ENCODE measurements at regions of chr3 and their contacts with region 1.

Region 1: DNA sequence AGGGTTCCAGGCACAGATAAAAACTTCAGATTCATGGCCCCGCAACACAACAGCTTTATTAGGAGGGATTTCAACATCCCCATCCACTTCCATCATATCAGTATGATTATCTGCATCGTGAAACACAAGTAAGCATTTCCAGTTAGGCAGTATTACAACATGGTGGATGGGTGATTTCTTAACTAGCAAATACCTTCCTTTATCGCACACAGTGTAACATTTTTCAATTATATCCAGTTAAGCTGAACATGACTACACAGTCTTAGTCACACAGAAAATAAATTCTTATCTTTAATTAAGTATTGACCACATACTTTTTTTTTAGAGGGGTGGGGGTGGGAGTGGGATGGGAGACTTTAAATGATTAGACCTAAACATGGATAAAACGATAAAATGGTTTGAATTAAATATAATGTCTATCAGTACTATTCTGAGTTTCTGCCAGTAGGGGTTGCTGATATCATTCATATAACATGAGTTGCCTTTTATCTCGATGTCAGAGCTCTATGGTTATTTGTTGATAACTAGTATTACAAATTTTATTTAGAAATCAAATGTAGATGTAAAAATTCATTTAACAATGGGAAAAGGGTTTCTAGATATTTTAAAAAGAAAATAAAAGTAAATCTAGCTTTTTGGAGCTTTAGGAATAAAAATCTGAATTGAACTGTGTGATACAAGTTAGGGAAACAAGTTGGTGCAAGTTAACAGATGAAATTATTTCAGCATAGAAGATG is 146.6 kb downstream of the TBL1XR1 start:
- DNase-seq: peak in 3 of 14 experiments; percentile 70 to 76 (median 75)
- ATAC-seq: peak; percentile 93
- H3K4me3 ChIP-seq: no peak overlapping the region
- H3K4me3 Mint-ChIP-seq: no peak overlapping the region
- H3K27ac ChIP-seq: no peak overlapping the region
- H3K27ac Mint-ChIP-seq: peak overlapping the region; percentile 70
- H3K4me1 ChIP-seq: no peaks in the 10 kb centered on the region
- H3K4me1 Mint-ChIP-seq: peaks cover 22% of the 10 kb centered on the region
- H3K27me3 ChIP-seq: no peaks in the 10 kb centered on the region
- H3K27me3 Mint-ChIP-seq: no peaks in the 10 kb centered on the region
- CTCF ChIP-seq: peak; percentile 75

Region 2: GRCh38 chr3:177597311-177598096 is 546.8 kb after region 1 on chr3:
- CTCF ChIA-PET with region 1: no interaction called
- POLR2A ChIA-PET with region 1: no interaction called
- intact Hi-C with region 1: loop called in 1 of 2 experiments (anchors 5 kb)
- DNase-seq: peak in 7 of 14 experiments; percentile 3 to 85 (median 29)
- ATAC-seq: peak; percentile 93
- H3K4me3 ChIP-seq: peak overlapping the region; percentile 8
- H3K4me3 Mint-ChIP-seq: peak overlapping the region; percentile 83
- H3K27ac ChIP-seq: peak overlapping the region; percentile 67 to 79
- H3K27ac Mint-ChIP-seq: peak overlapping the region; percentile 96
- H3K4me1 ChIP-seq: peaks cover 37% of the 10 kb centered on the region
- H3K4me1 Mint-ChIP-seq: peaks cover 84% of the 10 kb centered on the region
- H3K27me3 ChIP-seq: no peaks in the 10 kb centered on the region
- H3K27me3 Mint-ChIP-seq: no peaks in the 10 kb centered on the region
- CTCF ChIP-seq: no peak

Region 3: GRCh38 chr3:177679568-177680441 is 629.1 kb after region 1 on chr3:
- CTCF ChIA-PET with region 1: no interaction called
- POLR2A ChIA-PET with region 1: no interaction called
- intact Hi-C with region 1: loop called in 1 of 2 experiments (anchors 10 kb)
- DNase-seq: peak in 1 of 14 experiments; percentile 55
- ATAC-seq: no peak
- H3K4me3 ChIP-seq: no peak overlapping the region
- H3K4me3 Mint-ChIP-seq: no peak overlapping the region
- H3K27ac ChIP-seq: no peak overlapping the region
- H3K27ac Mint-ChIP-seq: no peak overlapping the region
- H3K4me1 ChIP-seq: peaks cover 3% of the 10 kb centered on the region
- H3K4me1 Mint-ChIP-seq: peaks cover 17% of the 10 kb centered on the region
- H3K27me3 ChIP-seq: no peaks in the 10 kb centered on the region
- H3K27me3 Mint-ChIP-seq: no peaks in the 10 kb centered on the region
- CTCF ChIP-seq: no peak

Region 4: GRCh38 chr3:177777699-177778098 is 727.0 kb after region 1 on chr3:
- CTCF ChIA-PET with region 1: no interaction called
- POLR2A ChIA-PET with region 1: no interaction called
- intact Hi-C with region 1: loop called (anchors 2 to 10 kb)
- DNase-seq: peak in 10 of 14 experiments; percentile 7 to 58 (median 22)
- ATAC-seq: peak; percentile 55
- H3K4me3 ChIP-seq: no peak overlapping the region
- H3K4me3 Mint-ChIP-seq: no peak overlapping the region
- H3K27ac ChIP-seq: no peak overlapping the region
- H3K27ac Mint-ChIP-seq: no peak overlapping the region
- H3K4me1 ChIP-seq: peaks cover 16% of the 10 kb centered on the region
- H3K4me1 Mint-ChIP-seq: peaks cover 20% of the 10 kb centered on the region
- H3K27me3 ChIP-seq: no peaks in the 10 kb centered on the region
- H3K27me3 Mint-ChIP-seq: no peaks in the 10 kb centered on the region
- CTCF ChIP-seq: peak; percentile 35

Region 5: DNA sequence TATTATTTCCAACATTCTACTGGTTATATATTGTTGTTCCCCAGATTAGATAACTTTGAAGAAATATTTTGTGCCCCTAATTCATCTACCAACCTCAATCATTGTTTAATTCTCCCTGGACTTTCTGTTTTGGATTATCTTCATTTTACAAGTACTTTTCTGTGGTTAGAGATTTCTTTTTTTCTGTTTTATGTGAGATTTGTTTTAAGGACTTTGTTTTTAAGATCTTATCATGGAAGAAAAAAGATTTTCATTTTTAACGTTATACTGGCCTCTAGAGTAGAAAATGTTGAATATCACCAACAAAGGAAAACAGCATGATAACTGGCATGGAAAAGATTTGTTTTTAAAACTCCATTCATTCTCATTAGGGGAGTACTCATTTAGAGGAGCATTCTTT is 1274.7 kb after region 1 on chr3:
- CTCF ChIA-PET with region 1: interaction called, 3 read pairs
- POLR2A ChIA-PET with region 1: no interaction called
- intact Hi-C with region 1: loop called (anchors 1 to 5 kb)
- DNase-seq: peak in 1 of 14 experiments; percentile 22
- ATAC-seq: no peak
- H3K4me3 ChIP-seq: no peak overlapping the region
- H3K4me3 Mint-ChIP-seq: no peak overlapping the region
- H3K27ac ChIP-seq: no peak overlapping the region
- H3K27ac Mint-ChIP-seq: no peak overlapping the region
- H3K4me1 ChIP-seq: no peaks in the 10 kb centered on the region
- H3K4me1 Mint-ChIP-seq: no peaks in the 10 kb centered on the region
- H3K27me3 ChIP-seq: no peaks in the 10 kb centered on the region
- H3K27me3 Mint-ChIP-seq: no peaks in the 10 kb centered on the region
- CTCF ChIP-seq: no peak

Region 6: GRCh38 chr3:178385280-178385952 is 1334.7 kb after region 1 on chr3:
- CTCF ChIA-PET with region 1: interaction called, 6 read pairs
- POLR2A ChIA-PET with region 1: no interaction called
- intact Hi-C with region 1: loop called (anchors 1 to 2 kb)
- DNase-seq: peak in 4 of 14 experiments; percentile 8 to 47 (median 38)
- ATAC-seq: peak; percentile 44
- H3K4me3 ChIP-seq: no peak overlapping the region
- H3K4me3 Mint-ChIP-seq: no peak overlapping the region
- H3K27ac ChIP-seq: no peak overlapping the region
- H3K27ac Mint-ChIP-seq: no peak overlapping the region
- H3K4me1 ChIP-seq: no peaks in the 10 kb centered on the region
- H3K4me1 Mint-ChIP-seq: no peaks in the 10 kb centered on the region
- H3K27me3 ChIP-seq: no peaks in the 10 kb centered on the region
- H3K27me3 Mint-ChIP-seq: peaks cover 24% of the 10 kb centered on the region
- CTCF ChIP-seq: peak; percentile 76

Measured in CD4-positive, alpha-beta T cell (primary cell).